Gastrocnemius medialis (tissue), 4 donors: ENCODE measurements at regions of chr2 and their contacts with region 1.

Region 1: GRCh38 chr2:179636995-179637394 is 224.4 kb downstream of the ZNF385B start:
- DNase-seq: peak; percentile 19 to 32
- ATAC-seq: peak; percentile 97 to 98
- H3K4me3 ChIP-seq: no peak overlapping the region
- H3K27ac ChIP-seq: peak overlapping the region; percentile 23 to 59 (median 59)
- H3K4me1 ChIP-seq: peaks cover 13 to 14% of the 10 kb centered on the region in 2 donors
- H3K27me3 ChIP-seq: no peaks in the 10 kb centered on the region
- CTCF ChIP-seq: no peak
- POLR2A ChIP-seq: no peak

Region 2: GRCh38 chr2:179302764-179303571 is 334.0 kb before region 1 on chr2:
- in situ Hi-C with region 1: no loop called
- intact Hi-C with region 1: no loop called
- DNase-seq: no peak
- ATAC-seq: no peak
- H3K4me3 ChIP-seq: no peak overlapping the region
- H3K27ac ChIP-seq: no peak overlapping the region
- H3K4me1 ChIP-seq: no peaks in the 10 kb centered on the region
- H3K27me3 ChIP-seq: no peaks in the 10 kb centered on the region
- CTCF ChIP-seq: no peak
- POLR2A ChIP-seq: no peak

Region 3: DNA sequence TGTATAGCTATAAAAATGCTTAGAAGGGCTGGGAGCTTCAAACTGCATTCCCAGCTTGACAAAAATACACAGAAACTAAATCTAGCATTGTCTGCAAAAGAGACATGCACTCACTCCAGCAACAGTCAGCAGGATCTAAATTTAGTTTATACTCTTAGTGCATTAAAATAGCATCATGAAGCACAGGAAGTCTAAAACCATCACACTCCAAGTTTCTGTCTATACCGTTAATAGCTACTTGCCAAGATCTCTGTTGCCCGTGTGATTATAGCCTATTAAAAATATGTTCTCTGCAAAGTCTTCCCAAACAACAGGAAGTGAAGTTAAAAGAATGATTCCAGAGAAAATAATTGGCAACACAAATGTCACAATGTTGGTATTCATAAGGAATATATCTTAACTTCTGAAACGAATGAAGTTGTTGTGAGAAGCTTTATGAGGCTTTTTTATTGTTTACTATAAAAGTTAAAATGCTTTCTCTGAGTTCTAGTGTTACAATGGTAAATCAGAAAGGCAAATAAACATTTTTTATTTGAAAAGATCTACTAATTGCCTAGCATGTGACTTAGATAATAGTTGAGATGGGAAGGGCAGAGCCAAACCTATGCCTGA is 40.2 kb after region 1 on chr2:
- in situ Hi-C with region 1: no loop called
- intact Hi-C with region 1: loop called (anchors 2 kb)
- DNase-seq: no peak
- ATAC-seq: peak; percentile 89 to 97
- H3K4me3 ChIP-seq: no peak overlapping the region
- H3K27ac ChIP-seq: peak overlapping the region; percentile 64 to 77 (median 68)
- H3K4me1 ChIP-seq: peaks cover 11 to 21% of the 10 kb centered on the region in 2 donors
- H3K27me3 ChIP-seq: no peaks in the 10 kb centered on the region
- CTCF ChIP-seq: no peak
- POLR2A ChIP-seq: no peak

Region 4: DNA sequence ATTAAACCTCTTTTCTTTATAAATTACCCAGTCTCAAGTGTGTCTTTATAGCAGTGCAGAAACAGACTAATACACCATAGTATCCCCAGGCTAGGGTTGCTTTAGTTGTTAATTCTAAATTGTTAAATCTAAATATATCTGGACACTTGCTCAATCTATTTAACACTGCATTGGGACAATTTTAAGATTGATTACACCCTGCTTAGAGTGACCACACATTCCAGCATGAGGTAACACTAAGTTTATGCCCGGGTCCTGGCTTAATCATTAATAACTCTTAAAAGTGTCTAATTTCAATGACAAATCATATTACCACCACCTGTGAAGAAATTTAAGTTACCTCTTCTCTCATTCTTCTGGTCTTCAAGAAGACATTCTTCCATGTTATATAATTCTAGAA is 93.0 kb after region 1 on chr2:
- in situ Hi-C with region 1: no loop called
- intact Hi-C with region 1: no loop called
- DNase-seq: no peak
- ATAC-seq: no peak
- H3K4me3 ChIP-seq: no peak overlapping the region
- H3K27ac ChIP-seq: no peak overlapping the region
- H3K4me1 ChIP-seq: no peaks in the 10 kb centered on the region
- H3K27me3 ChIP-seq: no peaks in the 10 kb centered on the region
- CTCF ChIP-seq: no peak
- POLR2A ChIP-seq: no peak